CD8-positive, alpha-beta T cell (primary cell): ENCODE measurements at regions of chr20 and their contacts with region 1.

Region 1: DNA sequence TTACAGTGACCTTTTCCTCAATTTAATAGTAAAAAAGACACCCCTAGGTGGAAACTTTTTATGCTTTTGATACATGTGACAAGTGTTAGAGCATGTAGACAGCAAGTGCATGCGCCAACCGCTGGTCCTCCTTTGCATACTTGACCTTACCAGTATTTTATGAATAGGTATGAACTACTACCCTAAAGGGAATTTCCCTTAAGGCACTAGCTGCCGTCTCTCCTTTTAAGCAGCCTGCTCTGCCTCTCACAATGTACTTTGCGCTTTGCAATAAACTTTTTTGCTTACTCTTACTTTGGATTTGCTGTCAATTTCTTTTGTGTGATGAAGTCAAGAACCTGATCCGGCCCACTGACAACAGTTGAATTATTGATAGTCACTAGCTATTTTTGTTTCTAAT is 50.6 kb upstream of the ZNF133 start:
- DNase-seq: no peak
- ATAC-seq: no peak
- H3K4me3 ChIP-seq: no peak overlapping the region
- H3K4me3 Mint-ChIP-seq: no peak overlapping the region
- H3K27ac ChIP-seq: no peak overlapping the region
- H3K27ac Mint-ChIP-seq: no peak overlapping the region
- H3K4me1 ChIP-seq: no peaks in the 10 kb centered on the region
- H3K4me1 Mint-ChIP-seq: no peaks in the 10 kb centered on the region
- H3K27me3 ChIP-seq: no peaks in the 10 kb centered on the region
- H3K27me3 Mint-ChIP-seq: peaks cover 30% of the 10 kb centered on the region
- CTCF ChIP-seq: no peak

Region 2: DNA sequence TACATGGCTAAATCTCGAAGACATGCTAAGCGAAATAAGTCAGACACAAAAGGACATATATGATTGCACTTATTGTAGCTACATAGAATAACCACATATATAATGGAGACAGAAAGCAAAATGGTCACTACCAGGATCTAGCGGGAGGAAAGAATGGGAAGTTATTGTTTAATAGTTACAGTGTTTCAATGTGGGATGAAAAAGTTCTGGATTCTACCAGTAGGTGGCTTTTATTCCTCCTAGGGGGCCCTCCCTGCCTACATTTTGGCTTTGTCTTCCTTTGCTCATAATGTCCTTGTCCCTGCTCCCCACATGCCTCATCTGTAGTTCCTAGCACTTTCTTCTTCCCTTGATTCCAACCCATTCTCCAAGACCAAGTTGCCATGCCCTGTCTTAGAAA is 66.9 kb after region 1 on chr20:
- CTCF ChIA-PET with region 1: no interaction called
- POLR2A ChIA-PET with region 1: no interaction called
- intact Hi-C with region 1: loop called in 1 of 2 experiments (anchors 2 kb)
- DNase-seq: no peak
- ATAC-seq: no peak
- H3K4me3 ChIP-seq: no peak overlapping the region
- H3K4me3 Mint-ChIP-seq: no peak overlapping the region
- H3K27ac ChIP-seq: no peak overlapping the region
- H3K27ac Mint-ChIP-seq: no peak overlapping the region
- H3K4me1 ChIP-seq: no peaks in the 10 kb centered on the region
- H3K4me1 Mint-ChIP-seq: no peaks in the 10 kb centered on the region
- H3K27me3 ChIP-seq: no peaks in the 10 kb centered on the region
- H3K27me3 Mint-ChIP-seq: no peaks in the 10 kb centered on the region
- CTCF ChIP-seq: no peak